ENCODE measurements at regions of chr6 and their contacts with region 1.

Region 1: DNA sequence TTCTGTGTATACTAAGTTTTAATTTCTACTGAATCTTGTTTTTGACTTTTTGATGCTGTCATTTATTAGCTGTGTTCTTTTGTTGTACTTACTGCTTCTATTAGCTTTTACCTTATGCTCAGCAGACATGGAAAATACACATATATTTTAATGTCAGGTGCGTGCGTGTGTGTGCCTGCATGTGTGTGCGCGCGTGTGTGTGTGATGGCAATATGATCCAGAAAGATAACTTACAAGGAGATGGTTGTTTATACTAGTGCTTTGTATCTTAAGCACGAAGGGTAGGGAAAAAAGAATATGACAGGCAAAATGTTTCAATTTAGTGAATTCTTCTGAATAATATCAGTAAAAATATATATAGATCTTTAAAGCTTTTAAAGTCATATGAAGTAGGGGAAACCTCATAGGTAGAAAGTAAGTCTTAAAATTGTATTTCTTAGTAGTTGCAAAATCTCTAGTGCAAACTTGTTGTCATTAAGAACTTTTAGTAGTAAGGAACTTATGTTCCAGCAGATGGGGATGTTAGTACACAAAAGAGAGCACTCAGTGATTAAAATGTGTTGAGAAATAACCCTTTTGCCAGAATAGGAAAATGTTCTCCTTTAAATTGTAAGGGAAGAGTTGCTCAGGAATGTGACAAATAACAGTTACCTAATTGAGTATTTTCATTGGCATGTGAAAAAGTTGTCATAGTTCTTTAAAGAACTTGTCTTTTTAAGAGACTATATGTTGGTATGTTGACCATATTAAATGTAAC is 13.2 kb downstream of the QKI start:
- DNase-seq: peak in 2 of 4 experiments; percentile 24 to 59
- ATAC-seq: peak; percentile 55
- H3K4me3 ChIP-seq: no peak overlapping the region
- H3K27ac ChIP-seq: no peak overlapping the region
- H3K4me1 ChIP-seq: peaks cover 3 to 10% of the 10 kb centered on the region in 2 experiments; a peak in 2 of 5 replicates
- H3K27me3 ChIP-seq: no peaks in the 10 kb centered on the region
- CTCF ChIP-seq: peak in 1 of 3 experiments; percentile 70; a peak in 2 of 6 replicates
- EP300 ChIP-seq: no peak
- POLR2A ChIP-seq: no peak
- RAD21 ChIP-seq: peak; percentile 80 to 88

Region 2: GRCh38 chr6:163438940-163439335 is 11.3 kb after region 1 on chr6:
- CTCF ChIA-PET with region 1: no interaction called
- POLR2A ChIA-PET with region 1: interaction called, 14 read pairs
- in situ Hi-C with region 1: no loop called
- intact Hi-C with region 1: no loop called
- DNase-seq: peak; percentile 42 to 75 (median 44)
- ATAC-seq: peak; percentile 73
- H3K4me3 ChIP-seq: no peak overlapping the region
- H3K27ac ChIP-seq: no peak overlapping the region
- H3K4me1 ChIP-seq: peaks cover 13 to 15% of the 10 kb centered on the region in 2 experiments; a peak in 4 of 5 replicates
- H3K27me3 ChIP-seq: no peaks in the 10 kb centered on the region
- CTCF ChIP-seq: no peak
- EP300 ChIP-seq: no peak
- POLR2A ChIP-seq: no peak
- RAD21 ChIP-seq: no peak

Region 3: GRCh38 chr6:163572612-163573011 is 144.9 kb after region 1 on chr6:
- CTCF ChIA-PET with region 1: no interaction called
- POLR2A ChIA-PET with region 1: no interaction called
- in situ Hi-C with region 1: no loop called
- intact Hi-C with region 1: no loop called
- DNase-seq: peak; percentile 89 to 96 (median 92)
- ATAC-seq: peak; percentile 79
- H3K4me3 ChIP-seq: no peak overlapping the region
- H3K27ac ChIP-seq: peak overlapping the region; percentile 80
- H3K4me1 ChIP-seq: peaks cover 6 to 55% of the 10 kb centered on the region in 2 experiments
- H3K27me3 ChIP-seq: no peaks in the 10 kb centered on the region
- CTCF ChIP-seq: no peak
- EP300 ChIP-seq: peak; percentile 91; the same call in 1 of the 2 replicates
- POLR2A ChIP-seq: no peak
- RAD21 ChIP-seq: no peak